Right ventricle myocardium inferior (tissue), 1 donor: ENCODE measurements at regions of chr5 and their contacts with region 1.

Region 1: GRCh38 chr5:135191084-135191826 is 157.2 kb upstream of the PITX1 start:
- DNase-seq: peak; percentile 80
- ATAC-seq: peak; percentile 89

Region 2: GRCh38 chr5:134917070-134917815 is 274.0 kb before region 1 on chr5:
- intact Hi-C with region 1: loop called (anchors 5 kb)
- DNase-seq: no peak
- ATAC-seq: no peak

Region 3: GRCh38 chr5:135053278-135053677 is 138.0 kb before region 1 on chr5:
- intact Hi-C with region 1: loop called (anchors 10 kb)
- DNase-seq: peak; percentile 31
- ATAC-seq: no peak

Region 4: DNA sequence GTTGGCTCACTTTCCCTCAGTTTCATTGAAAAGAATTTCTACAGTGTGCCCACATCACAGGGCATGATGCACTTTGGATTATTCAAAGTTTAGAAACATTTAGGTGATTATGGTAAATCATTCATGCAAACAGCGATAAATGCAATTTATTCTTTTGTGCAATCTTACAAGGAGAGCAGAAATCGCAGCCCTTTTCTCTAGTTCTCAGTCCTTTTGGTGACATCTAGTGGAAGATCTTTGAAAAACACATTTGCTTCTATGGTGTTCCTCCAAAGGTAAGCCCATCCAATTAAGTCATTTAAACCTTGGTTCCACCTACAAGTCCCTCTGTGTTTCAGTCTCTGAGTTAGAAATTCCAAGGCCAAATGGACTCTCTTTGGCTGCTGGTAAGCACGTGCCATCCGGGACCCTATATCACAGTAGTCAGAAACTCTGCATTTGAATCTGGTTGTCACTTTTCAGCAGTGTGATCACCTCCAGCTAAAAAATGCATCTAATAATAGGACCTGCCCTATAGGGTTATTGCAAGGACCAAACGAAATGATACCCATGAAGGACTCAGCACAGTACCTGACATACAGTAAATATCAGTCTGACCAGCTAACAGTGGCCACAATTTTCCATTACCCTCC is 141.4 kb after region 1 on chr5:
- intact Hi-C with region 1: loop called (anchors 2 kb)
- DNase-seq: no peak
- ATAC-seq: no peak